ENCODE measurements at regions of chr1 and their contacts with region 1.

Region 1: DNA sequence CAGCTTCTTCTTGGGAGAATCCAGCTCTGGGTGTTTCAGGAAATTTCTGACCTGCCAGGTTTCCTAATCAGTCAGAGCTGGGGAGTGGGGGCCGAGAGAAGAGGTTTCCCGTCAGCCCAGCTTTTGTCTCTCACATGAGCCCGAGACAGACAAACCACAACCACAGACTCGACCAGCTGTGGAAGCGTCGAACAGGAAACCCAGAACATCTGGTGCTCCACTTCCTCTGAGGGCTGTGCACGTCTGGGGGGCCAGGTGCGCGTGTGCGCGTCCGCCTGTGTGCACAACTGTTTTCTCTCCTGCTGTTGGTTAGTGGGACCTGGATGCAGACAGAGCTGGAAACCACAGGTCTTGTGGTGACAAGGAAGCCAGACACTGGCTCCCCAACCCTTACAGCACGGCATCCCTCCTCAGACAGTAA is 113.0 kb upstream of the SLC25A33 start:
- DNase-seq: peak; percentile 91
- ATAC-seq: peak; percentile 26
- H3K4me3 Mint-ChIP-seq: peak overlapping the region; percentile 40
- H3K27ac Mint-ChIP-seq: peak overlapping the region; percentile 19
- H3K4me1 Mint-ChIP-seq: peaks cover 45% of the 10 kb centered on the region
- H3K27me3 Mint-ChIP-seq: peaks cover 16% of the 10 kb centered on the region
- CTCF ChIP-seq: no peak

Region 2: GRCh38 chr1:9338397-9339246 is 87.7 kb before region 1 on chr1:
- CTCF ChIA-PET with region 1: no interaction called
- POLR2A ChIA-PET with region 1: no interaction called
- intact Hi-C with region 1: no loop called
- DNase-seq: no peak
- ATAC-seq: no peak
- H3K4me3 Mint-ChIP-seq: no peak overlapping the region
- H3K27ac Mint-ChIP-seq: no peak overlapping the region
- H3K4me1 Mint-ChIP-seq: no peaks in the 10 kb centered on the region
- H3K27me3 Mint-ChIP-seq: no peaks in the 10 kb centered on the region
- CTCF ChIP-seq: no peak

Region 3: DNA sequence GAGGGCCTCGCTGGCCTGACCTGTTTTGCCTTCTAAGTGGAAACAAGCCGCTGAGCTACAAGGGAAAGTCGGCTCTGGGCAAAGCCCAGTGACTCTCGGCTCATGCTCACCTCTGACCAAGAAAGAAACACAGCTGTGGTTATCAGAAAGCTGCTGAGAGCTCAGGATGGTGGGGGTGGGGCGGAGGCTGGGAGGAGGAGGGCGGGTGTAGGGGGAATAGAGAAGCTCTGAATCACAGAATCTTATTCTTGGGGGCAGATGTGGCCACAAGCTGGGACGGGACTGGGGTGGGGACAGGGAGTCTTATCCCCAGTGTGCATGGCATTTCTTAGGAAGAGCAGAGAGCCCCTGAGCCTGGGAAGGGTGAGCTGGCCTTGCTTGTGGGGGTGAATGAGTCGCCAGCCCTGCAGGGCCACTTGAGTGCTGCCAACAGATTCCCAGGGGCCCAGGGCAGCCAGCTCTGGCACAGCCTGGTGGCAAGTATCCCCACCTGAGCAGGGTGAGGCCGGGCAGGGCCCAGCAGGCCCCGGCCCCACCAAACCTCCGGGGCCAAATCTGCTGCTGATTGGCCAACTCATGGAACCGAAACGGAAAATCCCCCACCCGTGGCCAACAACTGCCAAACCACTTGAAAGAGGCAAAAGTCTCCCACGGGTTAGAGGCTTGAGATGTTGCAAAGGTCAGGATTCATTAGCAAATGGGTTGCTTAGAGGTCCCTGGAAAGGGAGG is 13.0 kb before region 1 on chr1:
- CTCF ChIA-PET with region 1: interaction called, 14 read pairs
- POLR2A ChIA-PET with region 1: interaction called, 17 read pairs
- intact Hi-C with region 1: loop called (anchors 2 kb)
- DNase-seq: peak; percentile 89
- ATAC-seq: peak; percentile 84
- H3K4me3 Mint-ChIP-seq: no peak overlapping the region
- H3K27ac Mint-ChIP-seq: peak overlapping the region; percentile 64
- H3K4me1 Mint-ChIP-seq: peaks cover 45% of the 10 kb centered on the region
- H3K27me3 Mint-ChIP-seq: peaks cover 14% of the 10 kb centered on the region
- CTCF ChIP-seq: no peak